PC-9 (cell line): ENCODE measurements at regions of chr12 and their contacts with region 1.

Region 1: DNA sequence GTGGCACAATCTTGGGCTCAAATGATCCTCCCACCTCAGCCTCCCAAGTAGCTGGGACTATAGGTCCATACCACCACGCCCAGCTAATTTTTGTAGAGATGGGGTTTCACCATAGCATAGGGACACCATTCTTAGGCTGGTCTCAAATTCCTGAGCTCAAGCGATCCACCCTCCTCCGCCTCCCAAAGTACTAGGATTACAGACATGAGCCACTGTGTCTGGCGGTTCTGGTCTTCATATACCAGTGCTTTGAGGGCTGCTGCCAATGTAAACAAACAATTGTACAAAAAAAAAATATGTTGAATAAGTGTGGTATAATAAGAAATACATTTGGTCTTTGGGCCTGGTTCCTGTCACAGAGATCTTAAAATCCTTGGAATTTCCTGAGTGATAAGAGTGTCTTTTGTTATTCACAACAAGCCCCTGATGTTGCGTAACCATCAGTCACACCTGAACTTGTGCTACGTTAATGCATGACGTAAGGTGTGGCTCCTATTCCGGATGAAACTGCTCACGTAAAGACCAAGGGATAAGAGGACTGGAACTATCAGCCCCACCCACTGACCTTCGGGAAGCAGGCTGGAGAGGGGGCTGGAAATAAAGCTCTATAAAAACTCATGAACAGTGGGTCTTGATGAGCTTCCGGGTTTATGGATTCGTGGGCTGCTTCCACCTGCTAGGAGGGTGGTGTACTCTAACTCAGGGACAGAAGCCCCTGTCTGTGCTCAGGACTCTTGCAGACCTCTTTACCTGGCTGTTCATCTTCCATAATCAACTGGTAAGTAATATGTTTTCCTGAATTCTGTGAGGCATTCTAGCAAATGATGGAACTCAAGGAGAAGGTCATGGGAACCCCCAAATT is 16.5 kb upstream of the RIMKLB start:
- DNase-seq: peak; percentile 49 to 72
- H3K4me3 ChIP-seq: peak overlapping the region; percentile 29; the same call in 1 of the 2 replicates
- H3K27ac ChIP-seq: no peak overlapping the region
- H3K4me1 ChIP-seq: peaks cover 11% of the 10 kb centered on the region; the same call in 1 of the 2 replicates
- H3K27me3 ChIP-seq: no peaks in the 10 kb centered on the region
- CTCF ChIP-seq: no peak

Region 2: GRCh38 chr12:8465306-8465996 is 215.8 kb before region 1 on chr12:
- CTCF ChIA-PET with region 1: no interaction called
- POLR2A ChIA-PET with region 1: no interaction called
- intact Hi-C with region 1: no loop called
- DNase-seq: no peak
- H3K4me3 ChIP-seq: no peak overlapping the region
- H3K27ac ChIP-seq: no peak overlapping the region
- H3K4me1 ChIP-seq: no peaks in the 10 kb centered on the region
- H3K27me3 ChIP-seq: no peaks in the 10 kb centered on the region; the same call in 1 of the 2 replicates
- CTCF ChIP-seq: no peak

Region 3: DNA sequence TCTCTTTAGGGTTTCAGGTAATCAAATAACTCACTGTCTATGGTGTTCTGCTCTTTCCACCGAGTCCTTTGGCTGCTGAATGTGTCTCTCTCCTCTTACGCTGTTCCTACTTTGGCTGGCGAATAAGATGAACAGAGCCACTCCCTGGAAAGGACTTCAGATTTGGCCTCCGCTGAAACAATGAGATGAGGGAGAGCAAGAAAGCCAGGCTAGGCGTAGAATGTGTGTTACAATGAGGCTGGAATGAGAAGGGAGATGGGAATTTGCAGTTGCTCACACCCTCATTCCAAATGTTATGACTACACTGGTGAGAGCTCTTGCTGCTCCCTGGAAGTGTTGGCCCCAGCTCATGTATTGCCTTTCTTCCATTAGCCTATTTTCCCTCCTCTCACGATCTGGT is 18.7 kb before region 1 on chr12 and contains the start of gene MFAP5:
- CTCF ChIA-PET with region 1: interaction called, 14 read pairs
- POLR2A ChIA-PET with region 1: interaction called, 20 read pairs
- intact Hi-C with region 1: loop called (anchors 1 kb)
- DNase-seq: peak in 1 of 2 experiments; percentile 56
- H3K4me3 ChIP-seq: no peak within 1 kb of the TSS
- H3K27ac ChIP-seq: no peak within 1 kb of the TSS
- H3K4me1 ChIP-seq: 0 out of 2 replicates have a peak, but pooled peaks cover 7% of the 10 kb centered on the region
- H3K27me3 ChIP-seq: peaks cover 4% of the 10 kb centered on the region; the same call in 1 of the 2 replicates
- CTCF ChIP-seq: no peak
- total RNA-seq, gene MFAP5: 14.6 and 18.9 TPM in 2 replicates

Region 4: GRCh38 chr12:8780389-8780788 is 99.1 kb after region 1 on chr12:
- CTCF ChIA-PET with region 1: no interaction called
- POLR2A ChIA-PET with region 1: no interaction called
- intact Hi-C with region 1: loop called (anchors 5 kb)
- DNase-seq: peak; percentile 20 to 46
- H3K4me3 ChIP-seq: no peak overlapping the region
- H3K27ac ChIP-seq: no peak overlapping the region
- H3K4me1 ChIP-seq: no peaks in the 10 kb centered on the region
- H3K27me3 ChIP-seq: no peaks in the 10 kb centered on the region
- CTCF ChIP-seq: peak; percentile 53; the same call in 1 of the 2 replicates

Region 5: GRCh38 chr12:8813572-8814357 is 132.5 kb after region 1 on chr12:
- CTCF ChIA-PET with region 1: no interaction called
- POLR2A ChIA-PET with region 1: no interaction called
- intact Hi-C with region 1: no loop called
- DNase-seq: no peak
- H3K4me3 ChIP-seq: no peak overlapping the region
- H3K27ac ChIP-seq: no peak overlapping the region
- H3K4me1 ChIP-seq: no peaks in the 10 kb centered on the region
- H3K27me3 ChIP-seq: no peaks in the 10 kb centered on the region
- CTCF ChIP-seq: no peak

Region 6: GRCh38 chr12:8890313-8891085 is 209.2 kb after region 1 on chr12:
- CTCF ChIA-PET with region 1: interaction called, 5 read pairs
- POLR2A ChIA-PET with region 1: interaction called, 15 read pairs
- intact Hi-C with region 1: loop called (anchors 1 kb)
- DNase-seq: peak in 1 of 2 experiments; percentile 63
- H3K4me3 ChIP-seq: peak overlapping the region; percentile 43; the same call in 1 of the 2 replicates
- H3K27ac ChIP-seq: no peak overlapping the region
- H3K4me1 ChIP-seq: 0 out of 2 replicates have a peak, but pooled peaks cover 3% of the 10 kb centered on the region
- H3K27me3 ChIP-seq: no peaks in the 10 kb centered on the region
- CTCF ChIP-seq: peak; percentile 95

Region 7: GRCh38 chr12:8949342-8950220 is 268.3 kb after region 1 on chr12 and contains the start of gene M6PR:
- CTCF ChIA-PET with region 1: interaction called, 10 read pairs
- POLR2A ChIA-PET with region 1: no interaction called
- intact Hi-C with region 1: loop called (anchors 1 kb)
- DNase-seq: peak; percentile 92 to 97
- H3K4me3 ChIP-seq: peak within 1 kb of the TSS; percentile 93
- H3K27ac ChIP-seq: peak within 1 kb of the TSS; percentile 88
- H3K4me1 ChIP-seq: peaks cover 22% of the 10 kb centered on the region
- H3K27me3 ChIP-seq: no peaks in the 10 kb centered on the region
- CTCF ChIP-seq: no peak; the same call in 1 of the 2 replicates
- total RNA-seq, gene M6PR: 237 and 266 TPM in 2 replicates

Region 8: GRCh38 chr12:9039397-9039977 is 358.2 kb after region 1 on chr12:
- CTCF ChIA-PET with region 1: interaction called, 3 read pairs
- POLR2A ChIA-PET with region 1: no interaction called
- intact Hi-C with region 1: loop called (anchors 1 kb)
- DNase-seq: peak in 1 of 2 experiments; percentile 52
- H3K4me3 ChIP-seq: no peak overlapping the region
- H3K27ac ChIP-seq: no peak overlapping the region
- H3K4me1 ChIP-seq: no peaks in the 10 kb centered on the region
- H3K27me3 ChIP-seq: no peaks in the 10 kb centered on the region
- CTCF ChIP-seq: peak; percentile 85